PC-9 (cell line): ENCODE measurements at regions of chr5 and their contacts with region 1.

Region 1: GRCh38 chr5:62305715-62306322 is at the start of gene KIF2A:
- DNase-seq: peak; percentile 81 to 93
- H3K4me3 ChIP-seq: peak within 1 kb of the TSS; percentile 91
- H3K27ac ChIP-seq: peak within 1 kb of the TSS; percentile 51
- H3K4me1 ChIP-seq: 0 out of 2 replicates have a peak, but pooled peaks cover 7% of the 10 kb centered on the region
- H3K27me3 ChIP-seq: no peaks in the 10 kb centered on the region
- CTCF ChIP-seq: no peak
- total RNA-seq, gene KIF2A: 39.6 and 54.8 TPM in 2 replicates

Region 2: DNA sequence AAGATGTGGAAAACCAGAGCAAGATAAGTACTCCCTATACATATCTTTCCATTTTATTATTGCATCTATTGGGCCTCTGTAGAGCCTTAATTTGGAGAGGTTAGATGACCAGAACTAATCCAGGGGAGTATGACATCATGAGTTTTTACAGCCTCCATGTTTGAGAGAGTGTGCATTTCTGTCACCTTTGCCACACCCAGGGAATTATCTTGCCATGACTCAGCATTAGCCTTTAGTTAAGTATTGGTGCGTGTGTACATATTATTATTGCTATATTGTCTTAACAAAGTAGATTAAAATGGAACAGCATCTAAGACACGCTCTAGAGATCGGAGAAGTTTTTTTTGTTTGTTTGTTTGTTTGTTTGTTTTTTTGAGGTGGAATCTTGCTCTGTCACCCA is 70.2 kb after region 1 on chr5:
- CTCF ChIA-PET with region 1: no interaction called
- POLR2A ChIA-PET with region 1: interaction called, 16 read pairs
- intact Hi-C with region 1: no loop called
- DNase-seq: peak in 1 of 2 experiments; percentile 57
- H3K4me3 ChIP-seq: no peak overlapping the region
- H3K27ac ChIP-seq: peak overlapping the region; percentile 33; the same call in 1 of the 2 replicates
- H3K4me1 ChIP-seq: peaks cover 15% of the 10 kb centered on the region
- H3K27me3 ChIP-seq: no peaks in the 10 kb centered on the region
- CTCF ChIP-seq: no peak